Posterior vena cava (tissue), 2 donors: ENCODE measurements at regions of chr2 and their contacts with region 1.

Region 1: GRCh38 chr2:78890935-78891334 is 134.6 kb upstream of the REG3G start:
- DNase-seq: no peak

Region 2: GRCh38 chr2:77147153-77147552 is 1743.8 kb before region 1 on chr2:
- intact Hi-C with region 1: no loop called
- DNase-seq: no peak

Region 3: GRCh38 chr2:78861546-78861945 is 29.4 kb before region 1 on chr2:
- intact Hi-C with region 1: no loop called
- DNase-seq: no peak

Region 4: DNA sequence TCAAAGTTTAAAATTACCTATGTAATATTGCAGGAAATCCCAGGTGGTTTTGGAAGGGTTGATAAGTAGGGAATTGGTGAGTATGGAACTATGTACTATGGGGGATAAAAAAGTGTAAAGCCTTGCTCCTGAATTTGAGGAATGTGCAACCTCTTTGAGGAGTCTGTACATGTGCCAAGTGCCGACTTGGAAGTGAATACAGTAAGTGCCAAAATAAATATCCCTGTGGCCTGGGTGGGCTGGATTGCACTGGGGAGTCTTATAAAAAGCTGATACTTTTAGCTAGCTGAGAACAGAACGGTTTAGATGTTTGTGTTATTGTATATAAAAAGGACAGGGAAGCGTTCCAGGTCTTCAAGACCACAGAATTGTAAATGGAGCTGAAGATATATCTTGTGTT is 1730.7 kb after region 1 on chr2:
- intact Hi-C with region 1: loop called in 1 of 2 experiments (anchors 10 kb)
- DNase-seq: no peak